Activated naive CD4-positive, alpha-beta T cell treated with anti-CD3 and anti-CD28 coated beads for 36 hours (primary cell): ENCODE measurements at regions of chr6 and their contacts with region 1.

Region 1: GRCh38 chr6:38671885-38672467 is 31.0 kb downstream of the GLO1 start:
- DNase-seq: peak; percentile 56
- H3K4me3 Mint-ChIP-seq: no peak overlapping the region
- H3K27ac Mint-ChIP-seq: peak overlapping the region; percentile 66
- H3K4me1 Mint-ChIP-seq: peaks cover 45% of the 10 kb centered on the region
- H3K27me3 Mint-ChIP-seq: no peaks in the 10 kb centered on the region

Region 2: DNA sequence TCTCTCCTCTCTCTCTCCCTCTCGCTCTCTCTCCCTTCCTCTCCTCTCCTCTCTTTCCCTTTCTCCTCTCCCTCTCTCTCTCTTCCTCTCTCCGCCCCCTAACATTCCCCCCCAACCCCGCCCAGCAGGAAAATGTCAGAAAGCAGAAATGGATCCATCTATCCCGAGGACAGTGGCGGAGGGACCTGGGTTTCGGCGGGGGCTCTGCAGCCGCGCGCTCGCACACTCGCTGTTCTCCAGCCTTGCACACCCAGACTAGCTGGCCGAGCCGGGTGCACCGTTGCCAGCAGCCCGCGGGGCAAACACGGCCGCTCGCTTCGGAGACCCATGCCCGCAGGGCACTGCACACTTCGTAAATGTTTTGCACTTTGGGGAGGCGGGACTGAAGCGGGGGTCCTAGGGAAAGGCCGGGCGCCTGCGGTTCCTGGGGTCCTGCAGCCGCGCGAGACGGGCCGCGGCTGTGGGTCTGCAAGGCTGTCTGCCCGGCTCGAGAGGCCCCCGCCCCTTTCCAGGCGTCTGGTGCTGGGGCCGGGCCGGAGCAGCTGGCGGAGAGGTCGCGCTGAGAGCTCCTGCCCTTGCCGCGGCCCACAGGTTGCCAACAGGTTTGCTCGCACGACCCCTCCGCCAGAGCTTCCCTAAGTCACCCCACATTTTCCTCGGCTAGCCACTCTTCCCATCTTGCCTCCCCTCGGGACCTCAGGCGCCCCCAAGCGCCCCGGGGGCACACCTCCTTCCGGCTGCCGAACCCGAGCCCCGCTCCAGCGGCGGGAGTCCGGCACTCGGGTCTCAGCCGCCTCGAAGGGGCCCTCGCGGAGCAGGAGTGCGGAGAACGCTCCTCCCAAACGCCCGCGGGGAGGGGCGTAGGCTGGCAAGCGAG is 973.5 kb before region 1 on chr6:
- CTCF ChIA-PET with region 1: no interaction called
- intact Hi-C with region 1: loop called (anchors 1 kb)
- DNase-seq: peak; percentile 48
- H3K4me3 Mint-ChIP-seq: peak overlapping the region; percentile 98
- H3K27ac Mint-ChIP-seq: peak overlapping the region; percentile 82
- H3K4me1 Mint-ChIP-seq: peaks cover 18% of the 10 kb centered on the region
- H3K27me3 Mint-ChIP-seq: peaks cover 19% of the 10 kb centered on the region

Region 3: GRCh38 chr6:37850728-37851285 is 821.2 kb before region 1 on chr6:
- CTCF ChIA-PET with region 1: interaction called, 3 read pairs
- intact Hi-C with region 1: loop called (anchors 10 kb)
- DNase-seq: peak; percentile 10
- H3K4me3 Mint-ChIP-seq: no peak overlapping the region
- H3K27ac Mint-ChIP-seq: no peak overlapping the region
- H3K4me1 Mint-ChIP-seq: peaks cover 53% of the 10 kb centered on the region
- H3K27me3 Mint-ChIP-seq: no peaks in the 10 kb centered on the region

Region 4: GRCh38 chr6:38493931-38494547 is 177.9 kb before region 1 on chr6:
- CTCF ChIA-PET with region 1: no interaction called
- intact Hi-C with region 1: loop called (anchors 2 kb)
- DNase-seq: peak; percentile 95
- H3K4me3 Mint-ChIP-seq: no peak overlapping the region
- H3K27ac Mint-ChIP-seq: no peak overlapping the region
- H3K4me1 Mint-ChIP-seq: peaks cover 10% of the 10 kb centered on the region
- H3K27me3 Mint-ChIP-seq: no peaks in the 10 kb centered on the region

Region 5: GRCh38 chr6:38702558-38703397 is 30.8 kb after region 1 on chr6 and contains the start of gene GLO1:
- CTCF ChIA-PET with region 1: no interaction called
- intact Hi-C with region 1: loop called (anchors 1 kb)
- DNase-seq: peak; percentile 98
- H3K4me3 Mint-ChIP-seq: peak within 1 kb of the TSS; percentile 99
- H3K27ac Mint-ChIP-seq: peak within 1 kb of the TSS; percentile 97
- H3K4me1 Mint-ChIP-seq: peaks cover 37% of the 10 kb centered on the region
- H3K27me3 Mint-ChIP-seq: peaks cover 8% of the 10 kb centered on the region
- total RNA-seq, gene GLO1: 137 to 144 TPM

Region 6: DNA sequence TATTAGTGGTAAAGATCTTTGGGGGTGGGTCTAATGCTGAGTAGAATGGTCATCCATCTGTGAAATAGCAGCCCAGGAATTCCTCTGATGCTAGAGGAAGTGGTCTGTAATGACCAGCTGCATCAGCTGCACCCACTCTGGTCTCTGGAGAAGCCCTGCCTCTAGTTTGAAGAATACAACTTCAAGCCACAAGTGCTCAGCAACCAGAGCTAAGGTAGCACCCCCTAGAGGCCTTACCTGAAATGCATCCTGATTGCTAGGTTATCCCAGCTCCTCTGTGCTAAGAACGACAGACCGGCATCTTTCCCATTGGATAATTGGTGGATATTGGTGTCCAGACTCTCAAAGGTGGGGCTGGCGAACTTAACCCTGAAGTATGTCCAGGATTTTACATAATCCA is 101.4 kb after region 1 on chr6:
- CTCF ChIA-PET with region 1: no interaction called
- intact Hi-C with region 1: loop called (anchors 5 kb)
- DNase-seq: peak; percentile 62
- H3K4me3 Mint-ChIP-seq: no peak overlapping the region
- H3K27ac Mint-ChIP-seq: no peak overlapping the region
- H3K4me1 Mint-ChIP-seq: peaks cover 16% of the 10 kb centered on the region
- H3K27me3 Mint-ChIP-seq: peaks cover 19% of the 10 kb centered on the region